Right ventricle myocardium superior (tissue), 1 donor: ENCODE measurements at regions of chr19 and their contacts with region 1.

Region 1: GRCh38 chr19:40221858-40222837 is 4.0 kb upstream of the TTC9B start:
- DNase-seq: peak; percentile 68
- ATAC-seq: peak; percentile 85

Region 2: DNA sequence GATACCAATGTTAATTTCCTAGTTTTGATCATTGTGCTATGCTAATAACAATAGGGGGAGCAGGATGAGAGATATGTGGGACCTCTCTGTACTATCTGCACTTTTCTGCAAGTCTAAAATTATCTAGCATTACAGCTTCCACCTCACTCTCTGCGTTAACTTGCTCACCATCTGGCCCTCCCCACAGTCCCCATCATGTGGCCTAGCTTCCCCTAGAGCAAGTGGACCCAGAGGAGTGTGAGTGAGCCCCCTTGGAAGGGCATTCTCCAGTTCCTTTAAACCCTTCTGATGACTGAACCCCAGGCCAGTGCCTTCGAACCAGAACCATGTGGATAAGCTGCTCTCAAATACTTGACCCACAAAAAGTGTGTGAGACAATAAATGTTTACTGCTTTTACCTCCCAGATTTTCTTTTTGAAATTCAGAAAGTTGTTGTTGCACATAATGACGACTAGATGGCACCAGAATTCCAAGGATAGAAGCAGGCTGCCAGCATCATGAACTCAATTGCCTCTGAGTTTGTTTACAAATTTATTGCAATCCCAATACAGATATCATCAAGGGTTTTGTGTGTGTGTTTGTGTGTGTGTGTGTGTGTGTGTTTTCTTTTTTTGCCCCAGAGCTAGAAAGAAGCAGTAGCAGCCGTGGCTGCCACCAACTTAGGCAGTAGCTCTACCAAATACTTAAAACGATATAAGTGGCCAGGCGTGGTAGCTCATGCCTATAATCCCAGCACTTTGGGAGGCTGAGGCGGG is 82.4 kb before region 1 on chr19:
- intact Hi-C with region 1: loop called (anchors 2 kb)
- DNase-seq: no peak
- ATAC-seq: peak; percentile 31

Region 3: DNA sequence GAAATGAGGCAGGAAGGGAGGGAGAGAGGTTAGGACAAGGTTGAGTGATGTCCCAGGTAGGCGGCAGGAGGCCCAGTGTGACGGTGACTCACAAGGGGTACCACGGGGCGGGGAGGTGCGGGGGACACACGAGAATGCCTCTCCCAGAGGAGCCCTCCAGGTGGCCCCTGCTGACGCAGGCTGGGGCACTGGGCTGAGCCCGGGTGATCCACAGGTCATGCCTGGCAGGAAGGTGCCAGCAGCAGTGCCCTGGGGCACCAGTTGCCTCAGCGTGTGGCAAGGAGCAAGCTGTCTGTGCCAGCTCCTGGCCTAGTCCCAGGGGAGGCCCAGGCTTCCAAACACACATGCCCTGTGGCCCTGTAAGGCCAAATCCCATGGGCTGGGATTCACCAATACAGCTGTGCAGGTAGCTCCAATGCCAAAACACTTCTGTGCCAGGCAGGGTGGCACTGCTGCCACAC is 34.9 kb after region 1 on chr19:
- intact Hi-C with region 1: no loop called
- DNase-seq: peak; percentile 71
- ATAC-seq: peak; percentile 87

Region 4: DNA sequence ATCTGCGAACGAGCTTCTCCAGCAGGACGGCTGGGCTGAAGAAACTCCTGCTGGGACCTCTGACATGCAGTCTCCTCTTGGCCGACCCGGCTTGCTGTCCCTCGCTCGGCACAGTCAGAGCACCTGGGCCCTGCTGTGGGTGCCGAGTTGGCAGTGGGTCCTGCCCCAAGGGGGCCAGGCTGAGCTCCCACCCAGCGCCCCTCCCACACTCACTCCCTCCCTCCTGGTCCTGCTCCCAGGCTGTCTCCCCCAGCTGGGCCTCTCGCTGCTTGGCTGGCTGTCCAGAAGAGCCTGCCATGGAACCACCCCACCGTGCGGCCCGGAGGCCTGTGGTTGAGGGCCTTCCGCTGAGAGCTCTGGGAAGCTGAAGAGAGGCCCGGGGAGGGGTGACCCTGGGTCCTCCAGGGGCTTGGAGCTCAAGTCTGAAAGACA is 57.0 kb after region 1 on chr19:
- intact Hi-C with region 1: loop called (anchors 10 kb)
- DNase-seq: peak; percentile 88
- ATAC-seq: peak; percentile 79

Region 5: GRCh38 chr19:40425450-40426287 is 203.5 kb after region 1 on chr19 and contains the start of gene SERTAD1:
- intact Hi-C with region 1: no loop called
- DNase-seq: peak; percentile 100
- ATAC-seq: peak; percentile 90
- total RNA-seq, gene SERTAD1: 10.9 TPM